ENCODE measurements at regions of chr6 and their contacts with region 1.

Region 1: GRCh38 chr6:147459780-147460179 is 48.7 kb upstream of the SAMD5 start:
- DNase-seq: no peak
- ATAC-seq: no peak
- H3K4me3 ChIP-seq: no peak overlapping the region
- H3K4me3 Mint-ChIP-seq: no peak overlapping the region
- H3K27ac ChIP-seq: no peak overlapping the region
- H3K27ac Mint-ChIP-seq: no peak overlapping the region
- H3K4me1 ChIP-seq: no peaks in the 10 kb centered on the region
- H3K4me1 Mint-ChIP-seq: no peaks in the 10 kb centered on the region
- H3K27me3 ChIP-seq: no peaks in the 10 kb centered on the region
- H3K27me3 Mint-ChIP-seq: peaks cover 10 to 11% of the 10 kb centered on the region in 2 donors

Region 2: DNA sequence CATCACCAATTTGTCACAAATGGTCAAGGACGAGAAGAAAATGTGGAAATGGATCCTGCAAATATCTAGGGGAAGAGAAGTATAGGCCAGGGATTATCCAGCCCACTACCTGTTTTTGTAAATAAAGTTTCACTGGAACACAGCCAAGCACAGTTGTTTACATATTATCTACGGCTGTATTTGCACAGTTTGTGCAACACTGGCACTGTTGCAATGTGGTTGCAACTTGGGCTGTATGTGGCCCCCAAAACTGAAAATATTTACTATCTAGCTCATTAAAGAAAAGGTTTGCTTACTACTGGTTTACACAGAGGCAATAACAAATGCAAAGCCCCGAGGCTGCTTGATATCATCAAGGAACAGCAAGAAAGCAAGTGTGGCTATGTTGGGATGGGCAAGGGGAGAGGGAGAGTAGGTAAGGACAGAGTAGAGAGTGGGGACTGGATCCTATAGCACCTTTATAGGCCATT is 267.4 kb before region 1 on chr6:
- CTCF ChIA-PET with region 1: no interaction called
- POLR2A ChIA-PET with region 1: no interaction called
- DNase-seq: no peak
- ATAC-seq: no peak
- H3K4me3 ChIP-seq: no peak overlapping the region
- H3K4me3 Mint-ChIP-seq: no peak overlapping the region
- H3K27ac ChIP-seq: no peak overlapping the region
- H3K27ac Mint-ChIP-seq: no peak overlapping the region
- H3K4me1 ChIP-seq: peaks cover 0 to 3% of the 10 kb centered on the region in 2 experiments
- H3K4me1 Mint-ChIP-seq: peaks cover 8 to 12% (median 11%) of the 10 kb centered on the region in 3 donors
- H3K27me3 ChIP-seq: no peaks in the 10 kb centered on the region
- H3K27me3 Mint-ChIP-seq: no peaks in the 10 kb centered on the region

Region 3: DNA sequence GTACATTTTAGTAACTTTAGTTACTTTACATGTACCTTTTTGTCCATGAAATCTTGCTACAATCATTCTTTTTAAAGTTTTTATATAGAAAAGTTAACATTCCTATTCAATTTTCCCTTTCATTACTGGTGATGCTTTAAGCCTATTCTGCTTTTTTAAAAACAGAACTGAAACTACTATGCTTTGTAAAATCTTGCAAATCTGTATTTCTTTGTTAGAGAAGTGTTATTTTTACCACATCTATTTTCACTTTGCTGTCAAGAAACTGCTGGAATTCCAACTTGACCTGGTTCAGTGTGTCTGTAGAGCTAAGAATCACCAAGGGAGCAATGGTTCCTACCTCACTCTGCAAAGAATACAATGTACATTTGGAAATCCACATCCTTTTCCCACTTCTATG is 26.9 kb after region 1 on chr6:
- CTCF ChIA-PET with region 1: no interaction called
- POLR2A ChIA-PET with region 1: no interaction called
- DNase-seq: no peak
- ATAC-seq: no peak
- H3K4me3 ChIP-seq: no peak overlapping the region
- H3K4me3 Mint-ChIP-seq: no peak overlapping the region
- H3K27ac ChIP-seq: no peak overlapping the region
- H3K27ac Mint-ChIP-seq: no peak overlapping the region
- H3K4me1 ChIP-seq: no peaks in the 10 kb centered on the region
- H3K4me1 Mint-ChIP-seq: no peaks in the 10 kb centered on the region
- H3K27me3 ChIP-seq: no peaks in the 10 kb centered on the region
- H3K27me3 Mint-ChIP-seq: peaks cover 0 to 7% of the 10 kb centered on the region in 2 donors

Region 4: GRCh38 chr6:148166339-148166968 is 706.7 kb after region 1 on chr6:
- CTCF ChIA-PET with region 1: no interaction called
- POLR2A ChIA-PET with region 1: interaction called in 1 of 2 experiments, 10 read pairs
- DNase-seq: peak in 1 of 35 experiments; percentile 53
- ATAC-seq: no peak
- H3K4me3 ChIP-seq: no peak overlapping the region
- H3K4me3 Mint-ChIP-seq: no peak overlapping the region
- H3K27ac ChIP-seq: no peak overlapping the region
- H3K27ac Mint-ChIP-seq: no peak overlapping the region
- H3K4me1 ChIP-seq: no peaks in the 10 kb centered on the region
- H3K4me1 Mint-ChIP-seq: no peaks in the 10 kb centered on the region
- H3K27me3 ChIP-seq: peaks cover 0 to 2% of the 10 kb centered on the region in 2 experiments
- H3K27me3 Mint-ChIP-seq: peaks cover 6 to 9% of the 10 kb centered on the region in 2 donors

Measured in T-cell (primary cell).